Left ventricle myocardium inferior (tissue), 1 donor: ENCODE measurements at regions of chr5 and their contacts with region 1.

Region 1: GRCh38 chr5:177958696-177959095 is 37.3 kb downstream of the PROP1 start:
- DNase-seq: no peak
- H3K4me3 ChIP-seq: no peak overlapping the region
- H3K27ac ChIP-seq: no peak overlapping the region
- H3K4me1 ChIP-seq: no peaks in the 10 kb centered on the region
- H3K27me3 ChIP-seq: no peaks in the 10 kb centered on the region
- CTCF ChIP-seq: no peak

Region 2: DNA sequence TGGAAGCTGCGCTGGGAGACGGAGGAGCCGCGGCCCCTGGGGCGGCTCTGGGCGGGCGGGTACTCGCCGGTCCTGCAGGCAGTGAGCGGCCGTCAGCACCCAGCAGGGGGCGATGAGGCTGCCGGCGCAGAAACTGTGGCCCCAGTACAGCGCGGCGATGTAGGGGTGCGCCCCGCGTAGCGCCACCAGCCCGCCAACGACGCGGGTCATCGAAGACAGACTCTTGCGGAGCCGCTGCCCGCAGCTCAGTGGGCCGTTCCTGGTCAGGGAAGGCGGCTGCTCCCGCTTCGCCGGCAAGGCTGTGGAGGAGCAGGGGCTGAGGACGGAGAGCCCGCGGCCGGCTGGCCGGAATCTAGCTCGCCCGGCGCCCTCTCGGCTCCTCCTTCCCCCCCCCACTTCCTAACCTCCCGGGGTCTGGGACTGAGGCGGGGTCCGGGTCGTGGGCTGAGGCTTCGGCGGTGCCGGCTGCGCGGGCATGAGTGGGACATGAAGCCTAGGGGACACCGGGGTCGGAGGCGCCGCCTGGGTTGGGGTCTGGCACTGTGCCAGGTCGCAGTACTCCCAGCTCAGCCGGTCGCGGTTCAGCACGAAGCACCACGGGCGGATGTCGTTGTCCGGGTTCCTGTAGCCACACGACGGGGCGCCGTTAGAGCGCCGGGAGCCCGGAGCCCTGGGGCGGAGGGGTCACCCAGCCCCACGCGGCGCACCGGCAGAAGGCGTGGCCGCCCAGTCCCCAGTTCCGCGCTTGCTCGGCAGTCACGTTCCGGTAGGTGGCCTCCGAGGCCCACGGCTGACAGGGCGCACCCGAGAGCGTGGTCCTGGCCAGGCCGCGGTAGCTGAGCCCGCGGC is 554.7 kb before region 1 on chr5:
- intact Hi-C with region 1: no loop called
- DNase-seq: peak; percentile 86
- H3K4me3 ChIP-seq: peak overlapping the region; percentile 74
- H3K27ac ChIP-seq: no peak overlapping the region
- H3K4me1 ChIP-seq: peaks cover 39% of the 10 kb centered on the region
- H3K27me3 ChIP-seq: peaks cover 99% of the 10 kb centered on the region
- CTCF ChIP-seq: peak; percentile 78

Region 3: GRCh38 chr5:177609076-177610059 is 349.3 kb before region 1 on chr5:
- intact Hi-C with region 1: loop called (anchors 10 kb)
- DNase-seq: no peak
- H3K4me3 ChIP-seq: no peak overlapping the region
- H3K27ac ChIP-seq: no peak overlapping the region
- H3K4me1 ChIP-seq: peaks cover 11% of the 10 kb centered on the region
- H3K27me3 ChIP-seq: no peaks in the 10 kb centered on the region
- CTCF ChIP-seq: no peak

Region 4: GRCh38 chr5:178476972-178477754 is 518.5 kb after region 1 on chr5:
- intact Hi-C with region 1: no loop called
- DNase-seq: no peak
- H3K4me3 ChIP-seq: no peak overlapping the region
- H3K27ac ChIP-seq: no peak overlapping the region
- H3K4me1 ChIP-seq: no peaks in the 10 kb centered on the region
- H3K27me3 ChIP-seq: no peaks in the 10 kb centered on the region
- CTCF ChIP-seq: no peak